ENCODE measurements at regions of chr19 and their contacts with region 1.

Region 1: DNA sequence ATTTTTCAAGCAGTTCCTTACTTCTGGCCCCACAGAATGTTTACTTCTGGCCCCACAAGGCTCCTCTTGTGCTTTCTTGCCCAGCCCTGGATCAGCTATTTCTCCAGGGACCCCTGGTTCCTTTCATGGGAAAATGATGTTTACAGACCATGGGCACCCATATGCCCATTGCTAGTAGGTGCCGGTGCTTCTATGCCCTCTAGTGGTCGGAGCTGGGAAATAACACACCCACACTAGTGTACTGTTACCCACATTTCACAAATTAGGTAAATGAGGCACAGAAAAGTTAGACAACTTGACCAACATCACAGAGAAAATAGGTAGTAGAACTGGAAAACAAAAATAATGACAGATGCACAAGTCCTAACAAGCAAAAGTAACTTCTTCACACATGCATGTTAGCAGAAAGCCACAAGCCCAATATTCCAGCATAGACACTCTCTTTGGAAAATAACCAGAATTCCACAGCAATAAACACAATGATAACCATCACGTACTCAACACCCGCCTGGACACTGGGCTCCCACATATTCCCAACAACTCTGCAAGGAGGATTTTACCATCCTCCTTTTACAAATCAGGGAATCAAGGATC is 1.3 kb upstream of the CEACAM6 start:
- DNase-seq: no peak
- ATAC-seq: no peak
- H3K4me3 ChIP-seq: no peak overlapping the region
- H3K27ac ChIP-seq: no peak overlapping the region
- H3K4me1 ChIP-seq: no peaks in the 10 kb centered on the region
- H3K27me3 ChIP-seq: peaks cover 0 to 5% (median 0%) of the 10 kb centered on the region in 3 donors
- CTCF ChIP-seq: peak in 3 of 5 experiments; percentile 14 to 50 (median 41)
- POLR2A ChIP-seq: no peak

Region 2: DNA sequence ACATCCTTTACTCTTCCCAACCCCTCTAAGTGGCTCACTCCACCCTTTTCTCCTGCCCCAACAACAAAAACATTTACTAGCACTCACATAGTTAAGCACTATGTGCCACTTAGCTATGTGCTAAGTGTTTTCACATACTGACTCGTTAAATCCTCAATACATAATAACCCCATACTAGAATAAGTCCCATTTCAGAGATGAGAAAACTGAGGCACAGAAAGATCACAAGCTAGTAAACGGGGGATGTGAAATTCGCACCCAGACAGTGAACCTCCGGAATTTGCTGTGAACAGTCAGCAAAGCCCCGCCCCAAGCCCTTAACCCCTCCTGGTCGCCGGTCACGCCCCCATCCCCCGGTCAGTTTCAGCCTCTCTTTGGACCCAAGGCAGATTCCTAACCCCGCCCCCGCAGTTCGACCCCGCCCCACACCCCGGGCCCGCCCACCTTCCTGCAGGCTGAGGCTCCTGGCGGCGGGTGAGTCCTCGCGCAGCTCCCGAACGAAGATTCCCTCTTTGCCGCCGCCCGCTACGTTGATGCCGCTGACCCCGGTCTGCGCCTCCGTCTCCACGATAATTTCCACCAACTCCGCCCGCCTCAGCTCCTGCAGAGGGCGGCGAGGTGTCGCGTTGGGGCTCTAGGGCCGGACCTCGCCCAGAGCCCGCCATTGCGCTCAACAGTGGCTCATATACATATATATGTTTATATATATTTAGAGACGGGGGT is 1350.6 kb before region 1 on chr19:
- in situ Hi-C with region 1: loop called in 1 of 4 experiments (anchors 25 kb)
- intact Hi-C with region 1: no loop called
- DNase-seq: peak; percentile 70 to 77
- ATAC-seq: peak; percentile 57 to 76
- H3K4me3 ChIP-seq: peak overlapping the region; percentile 69 to 82 (median 71)
- H3K27ac ChIP-seq: peak overlapping the region; percentile 87 to 92 (median 88)
- H3K4me1 ChIP-seq: peaks cover 8 to 11% of the 10 kb centered on the region in 2 donors
- H3K27me3 ChIP-seq: no peaks in the 10 kb centered on the region
- CTCF ChIP-seq: peak in 1 of 5 experiments; percentile 33
- POLR2A ChIP-seq: no peak

Measured in gastrocnemius medialis (tissue), 4 donors.